Spleen (tissue), 13 donors: ENCODE measurements at regions of chr1 and their contacts with region 1.

Region 1: DNA sequence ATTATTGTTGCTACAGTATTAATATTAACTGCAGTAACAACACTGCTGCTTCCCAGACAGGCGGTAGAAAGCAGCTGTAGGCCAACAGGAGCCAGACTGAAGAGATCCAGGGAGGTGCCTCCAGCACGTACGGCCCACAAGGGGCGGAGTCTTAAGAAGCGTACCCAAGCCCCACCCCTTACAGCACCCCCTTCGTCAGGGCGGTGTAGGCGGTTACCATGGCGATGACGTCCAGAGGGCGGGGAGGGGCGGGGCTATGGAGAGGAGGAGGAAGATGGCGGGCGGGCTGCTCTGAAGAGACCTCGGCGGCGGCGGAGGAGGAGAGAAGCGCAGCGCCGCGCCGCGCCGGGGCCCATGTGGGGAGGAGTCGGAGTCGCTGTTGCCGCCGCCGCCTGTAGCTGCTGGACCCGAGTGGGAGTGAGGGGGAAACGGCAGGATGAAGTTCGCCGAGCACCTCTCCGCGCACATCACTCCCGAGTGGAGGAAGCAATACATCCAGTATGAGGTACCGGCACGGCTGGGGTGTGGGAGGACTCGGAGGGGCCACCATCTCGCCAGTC is at the start of gene XPR1:
- DNase-seq: peak; percentile 99
- H3K4me3 ChIP-seq: peak within 1 kb of the TSS; percentile 71 to 97 (median 92)
- H3K27ac ChIP-seq: peak within 1 kb of the TSS; percentile 69 to 97 (median 94)
- H3K4me1 ChIP-seq: peaks cover 18 to 53% (median 38%) of the 10 kb centered on the region in 6 donors
- H3K27me3 ChIP-seq: no peaks in the 10 kb centered on the region
- CTCF ChIP-seq: peak in 8 of 11 experiments; percentile 23 to 59 (median 45)
- POLR2A ChIP-seq: peak in 2 of 3 donors; percentile 77 to 91
- total RNA-seq, gene XPR1: 12.5 to 26.8 (median 22.5) TPM

Region 2: GRCh38 chr1:180533266-180533987 is 98.4 kb before region 1 on chr1:
- intact Hi-C with region 1: loop called (anchors 10 kb)
- DNase-seq: peak; percentile 84
- H3K4me3 ChIP-seq: no peak overlapping the region
- H3K27ac ChIP-seq: no peak overlapping the region
- H3K4me1 ChIP-seq: peaks cover 0 to 17% (median 6%) of the 10 kb centered on the region in 6 donors
- H3K27me3 ChIP-seq: peaks cover 0 to 7% (median 0%) of the 10 kb centered on the region in 7 donors
- CTCF ChIP-seq: peak; percentile 55 to 89 (median 80)
- POLR2A ChIP-seq: no peak